Ovary (tissue), 10 donors: ENCODE measurements at regions of chr10 and their contacts with region 1.

Region 1: DNA sequence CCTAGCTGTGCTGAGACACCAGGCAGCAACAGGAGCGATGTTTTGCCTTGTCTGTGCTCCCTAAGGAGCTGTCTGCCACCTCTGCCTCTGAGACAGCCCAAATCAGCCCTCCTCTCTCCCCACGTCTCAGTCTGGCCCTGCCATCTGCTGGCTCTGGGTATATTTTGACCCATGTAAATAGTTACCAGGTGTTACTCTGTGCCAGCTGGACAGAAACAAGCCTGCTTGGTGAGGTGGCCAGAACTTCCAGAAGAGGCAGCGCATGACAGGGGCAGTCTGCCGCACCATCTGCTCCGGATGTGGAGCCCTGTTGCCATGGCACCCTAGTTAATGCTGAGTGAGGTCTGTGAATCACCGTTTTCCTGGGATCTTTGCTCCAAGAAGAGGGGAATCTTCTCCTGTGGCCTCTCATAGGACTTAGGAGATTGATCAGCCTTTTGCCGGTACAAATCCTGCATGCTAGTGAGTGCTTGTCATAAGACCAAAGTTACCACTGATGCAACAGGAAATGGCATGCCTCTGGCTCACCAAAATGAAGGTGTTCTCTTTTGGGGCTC is 31.8 kb downstream of the GSTO2 start:
- DNase-seq: peak; percentile 59 to 72 (median 66)
- H3K4me3 ChIP-seq: no peak overlapping the region
- H3K27ac ChIP-seq: peak overlapping the region; percentile 87 to 95
- H3K4me1 ChIP-seq: peaks cover 24% of the 10 kb centered on the region
- H3K27me3 ChIP-seq: no peaks in the 10 kb centered on the region
- CTCF ChIP-seq: no peak
- EP300 ChIP-seq: no peak
- POLR2A ChIP-seq: no peak

Region 2: DNA sequence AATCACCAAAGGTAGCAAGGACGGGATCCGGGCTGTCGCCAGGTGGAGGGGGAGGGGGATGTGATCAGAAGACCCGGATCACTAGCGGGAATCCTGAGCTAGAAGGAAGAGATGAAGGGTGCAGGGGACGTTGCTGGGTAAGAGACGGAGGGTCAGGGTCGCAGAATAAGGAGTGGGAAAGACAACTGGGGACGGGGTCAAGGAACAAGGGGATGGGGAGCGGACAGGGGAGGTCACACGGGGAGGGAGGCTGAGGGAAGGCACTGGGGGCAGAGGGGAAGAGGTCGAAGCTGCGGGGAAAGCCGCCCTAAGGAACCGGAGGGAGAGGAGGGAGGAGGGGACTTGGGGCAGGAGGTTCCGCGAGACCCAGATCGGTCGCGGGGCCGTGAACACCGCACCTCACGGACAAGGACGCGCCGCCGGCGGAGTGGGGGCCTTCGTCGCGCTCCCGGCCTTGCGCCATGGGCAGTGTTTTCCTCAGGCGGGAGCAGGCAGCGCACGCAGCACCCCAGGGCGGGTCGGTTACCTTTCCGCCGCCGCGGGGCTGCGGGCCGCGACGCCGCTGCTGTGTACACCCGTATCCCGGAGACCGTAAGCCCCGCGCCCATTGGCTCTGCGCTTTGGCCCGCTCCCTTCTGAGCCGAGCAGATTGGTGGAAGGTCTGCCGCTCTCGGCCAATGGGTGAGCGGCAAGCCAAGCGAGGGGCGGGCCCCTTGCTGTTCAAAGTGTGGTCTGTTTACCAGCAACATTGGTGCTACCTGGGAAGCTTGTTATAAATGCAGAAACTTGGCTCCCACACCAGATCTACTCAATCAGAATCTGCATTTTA is 68.8 kb before region 1 on chr10 and contains the start of gene CFAP43:
- intact Hi-C with region 1: no loop called
- DNase-seq: peak; percentile 97 to 99 (median 99)
- H3K4me3 ChIP-seq: peak within 1 kb of the TSS; percentile 80
- H3K27ac ChIP-seq: no peak within 1 kb of the TSS
- H3K4me1 ChIP-seq: peaks cover 1% of the 10 kb centered on the region
- H3K27me3 ChIP-seq: no peaks in the 10 kb centered on the region
- CTCF ChIP-seq: no peak
- EP300 ChIP-seq: no peak
- POLR2A ChIP-seq: peak; percentile 33
- total RNA-seq, gene CFAP43: 1.5 to 58.6 (median 3.2) TPM

Region 3: DNA sequence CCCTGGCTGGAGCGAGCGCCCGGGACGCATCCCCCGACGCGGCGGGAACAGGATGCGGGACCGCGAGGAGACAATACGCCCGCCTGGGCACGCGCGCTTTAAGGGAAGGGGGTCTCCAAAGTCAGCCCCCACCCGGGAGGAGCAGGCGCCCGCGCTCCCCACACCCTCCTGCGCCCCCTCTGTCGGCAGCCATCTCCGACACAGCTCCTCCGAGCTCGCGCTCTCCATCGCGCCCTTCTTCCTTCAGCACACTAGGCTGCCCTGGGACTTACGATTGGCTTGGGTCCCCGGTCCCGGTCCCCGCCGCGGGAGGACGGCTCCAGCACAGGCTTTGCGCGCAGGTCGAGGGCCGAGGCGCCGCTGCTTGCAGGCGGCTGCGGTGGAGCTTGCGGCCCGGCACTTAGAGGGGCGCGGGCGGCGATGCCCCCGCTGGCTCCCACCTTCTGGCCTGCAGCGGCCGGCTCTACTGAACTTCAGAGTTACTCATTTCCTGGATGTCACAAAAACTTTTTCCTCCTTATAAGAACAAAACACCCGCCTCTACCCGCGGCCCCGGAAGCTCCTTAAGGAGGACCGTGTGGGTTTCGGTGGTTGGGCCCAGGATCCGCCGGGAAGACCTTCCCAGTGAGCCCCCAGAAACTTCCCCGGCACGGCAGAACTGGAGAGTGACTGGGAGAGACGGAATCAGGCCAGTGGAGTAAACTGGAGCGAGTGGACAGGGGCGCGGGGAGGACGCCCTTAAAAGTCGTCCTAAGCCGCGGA is 37.3 kb after region 1 on chr10 and contains the start of gene ITPRIP:
- intact Hi-C with region 1: loop called in 3 of 4 experiments (anchors 5 kb)
- DNase-seq: peak; percentile 77 to 83 (median 78)
- H3K4me3 ChIP-seq: peak within 1 kb of the TSS; percentile 92
- H3K27ac ChIP-seq: peak within 1 kb of the TSS; percentile 89 to 97
- H3K4me1 ChIP-seq: peaks cover 9% of the 10 kb centered on the region
- H3K27me3 ChIP-seq: no peaks in the 10 kb centered on the region
- CTCF ChIP-seq: peak in 2 of 3 donors; percentile 29 to 47
- EP300 ChIP-seq: no peak
- POLR2A ChIP-seq: peak; percentile 91
- total RNA-seq, gene ITPRIP: 15.7 to 38.1 (median 29.2) TPM